Transverse colon (tissue), 4 donors: ENCODE measurements at regions of chrX and their contacts with region 1.

Region 1: DNA sequence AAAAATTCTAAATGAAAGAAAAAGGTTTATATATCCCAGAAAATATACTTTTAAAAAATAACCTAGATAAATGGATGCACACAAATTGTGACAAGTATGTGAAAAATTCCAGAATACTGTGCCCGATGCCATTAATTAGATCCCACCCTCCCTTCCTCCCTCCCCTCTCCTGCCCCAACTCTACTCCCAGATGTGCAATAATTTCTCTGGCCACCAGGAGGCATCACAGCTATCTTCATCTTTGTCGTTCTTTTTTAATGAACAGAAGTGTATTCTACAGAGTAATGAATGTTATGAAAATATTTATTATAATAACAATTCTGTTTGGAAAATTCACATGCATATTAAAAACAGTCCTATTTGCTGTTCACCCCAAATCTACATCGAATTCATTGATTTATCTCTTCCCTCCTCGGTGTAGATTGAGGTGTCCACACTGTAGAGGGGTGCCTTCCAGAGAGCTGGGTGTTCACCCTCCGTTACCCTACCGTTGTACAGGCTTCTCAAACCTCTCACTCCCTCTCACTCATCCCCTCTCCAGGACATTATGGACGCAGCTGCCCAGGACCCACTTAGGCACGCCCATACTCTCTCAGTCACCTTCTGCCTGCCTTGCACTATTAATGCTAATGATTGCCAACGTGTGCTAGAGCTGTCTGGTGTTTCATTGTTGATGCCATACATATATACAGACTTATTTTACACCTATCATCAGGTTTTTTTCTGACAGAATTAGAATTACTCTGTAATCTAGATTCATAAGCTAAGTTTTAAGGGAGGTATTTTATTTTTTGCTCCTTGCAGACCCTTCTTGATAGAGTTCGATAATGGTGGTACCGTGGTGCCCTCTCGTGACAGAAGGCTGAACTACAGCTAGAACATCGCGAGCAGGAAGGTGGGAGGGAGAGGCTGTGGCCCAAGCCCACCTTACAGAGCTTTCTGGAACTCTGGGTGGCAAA is 14.1 kb downstream of the RAB40AL start:
- DNase-seq: peak; percentile 44
- H3K4me3 ChIP-seq: peak overlapping the region in 1 of 4 donors; percentile 13
- H3K27ac ChIP-seq: no peak overlapping the region
- H3K4me1 ChIP-seq: no peaks in the 10 kb centered on the region
- H3K27me3 ChIP-seq: no peaks in the 10 kb centered on the region
- CTCF ChIP-seq: peak; percentile 47 to 56 (median 49)
- EP300 ChIP-seq: no peak
- POLR2A ChIP-seq: no peak

Region 2: DNA sequence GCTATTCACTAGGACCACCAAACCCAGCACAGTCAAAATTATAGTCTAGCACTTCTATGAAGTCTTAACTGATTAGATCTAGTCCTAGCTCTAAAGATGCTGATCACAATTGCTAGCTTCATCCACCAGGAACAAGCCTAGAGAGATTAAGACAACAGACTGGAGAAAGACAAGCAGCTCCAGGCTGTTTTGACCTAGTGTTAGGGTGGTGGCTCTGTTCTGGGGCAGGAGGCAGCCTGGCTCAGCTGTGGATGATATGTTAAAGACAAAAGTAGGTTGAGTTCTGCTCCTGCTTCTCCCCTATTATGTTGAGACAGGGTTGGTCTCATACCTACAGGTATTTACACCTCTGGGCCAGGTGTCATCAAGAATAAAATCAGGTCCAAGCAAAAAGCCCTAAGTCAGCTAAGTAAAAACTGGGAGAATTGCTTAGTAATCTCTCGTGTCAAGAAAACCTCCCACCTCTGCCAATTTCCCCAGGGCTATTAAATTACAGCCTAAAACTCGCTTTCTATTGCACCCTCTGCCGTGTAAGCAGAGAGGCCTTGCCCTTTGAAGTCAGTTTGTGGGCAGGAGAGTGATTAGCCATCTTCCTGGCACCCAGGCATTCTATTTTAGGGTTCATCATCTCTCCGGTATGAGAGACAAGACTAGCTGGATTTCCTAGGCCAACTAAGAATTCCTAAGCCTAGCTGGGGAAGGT is 25.8 kb after region 1 on chrX:
- in situ Hi-C with region 1: no loop called
- intact Hi-C with region 1: no loop called
- DNase-seq: no peak
- H3K4me3 ChIP-seq: no peak overlapping the region
- H3K27ac ChIP-seq: no peak overlapping the region
- H3K4me1 ChIP-seq: no peaks in the 10 kb centered on the region
- H3K27me3 ChIP-seq: no peaks in the 10 kb centered on the region
- CTCF ChIP-seq: no peak
- EP300 ChIP-seq: no peak
- POLR2A ChIP-seq: no peak

Region 3: GRCh38 chrX:103063918-103064434 is 112.8 kb after region 1 on chrX and contains the start of gene BEX1:
- in situ Hi-C with region 1: loop called in 1 of 4 experiments (anchors 25 kb)
- intact Hi-C with region 1: no loop called
- DNase-seq: peak; percentile 11
- H3K4me3 ChIP-seq: peak within 1 kb of the TSS in 2 of 4 donors; percentile 11 to 39
- H3K27ac ChIP-seq: no peak within 1 kb of the TSS
- H3K4me1 ChIP-seq: no peaks in the 10 kb centered on the region
- H3K27me3 ChIP-seq: no peaks in the 10 kb centered on the region
- CTCF ChIP-seq: no peak
- EP300 ChIP-seq: no peak
- POLR2A ChIP-seq: no peak
- total RNA-seq, gene BEX1: 3.0 to 3.3 TPM in 2 of 4 donors, not detected in the others

Region 4: GRCh38 chrX:103157496-103158320 is 206.5 kb after region 1 on chrX:
- in situ Hi-C with region 1: loop called in 3 of 4 experiments (anchors 10 to 25 kb)
- intact Hi-C with region 1: no loop called
- DNase-seq: no peak
- H3K4me3 ChIP-seq: no peak overlapping the region
- H3K27ac ChIP-seq: no peak overlapping the region
- H3K4me1 ChIP-seq: peaks cover 0 to under 1% (median 0%) of the 10 kb centered on the region in 4 donors
- H3K27me3 ChIP-seq: no peaks in the 10 kb centered on the region
- CTCF ChIP-seq: peak; percentile 32 to 51 (median 40)
- EP300 ChIP-seq: no peak
- POLR2A ChIP-seq: no peak

Region 5: GRCh38 chrX:103175944-103176753 is 225.0 kb after region 1 on chrX:
- in situ Hi-C with region 1: loop called in 3 of 4 experiments (anchors 25 kb)
- intact Hi-C with region 1: no loop called
- DNase-seq: peak; percentile 59
- H3K4me3 ChIP-seq: no peak overlapping the region
- H3K27ac ChIP-seq: no peak overlapping the region
- H3K4me1 ChIP-seq: no peaks in the 10 kb centered on the region
- H3K27me3 ChIP-seq: no peaks in the 10 kb centered on the region
- CTCF ChIP-seq: peak; percentile 40 to 67 (median 51)
- EP300 ChIP-seq: no peak
- POLR2A ChIP-seq: no peak